CD14-positive monocyte (primary cell): ENCODE measurements at regions of chrX and their contacts with region 1.

Region 1: DNA sequence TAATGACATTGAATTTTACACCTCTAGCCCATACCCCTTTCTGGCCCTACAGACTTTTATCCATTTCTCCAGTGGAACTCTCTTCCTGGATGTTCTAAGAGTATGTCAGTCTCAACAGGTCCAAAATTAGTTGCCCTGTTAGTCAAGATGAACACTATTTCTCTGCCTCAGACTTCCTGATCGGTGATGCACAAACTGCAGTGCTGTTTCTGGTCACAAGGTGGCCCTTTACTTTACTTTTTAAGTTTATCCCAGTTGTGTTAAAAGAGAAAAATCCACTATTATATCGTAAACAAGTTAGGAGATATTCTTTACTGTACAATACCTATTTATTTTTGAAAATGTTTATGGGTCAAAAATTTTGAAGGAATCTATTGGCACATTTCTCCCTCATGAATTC is 13.1 kb downstream of the TCEAL7 start:
- DNase-seq: peak in 2 of 3 donors; percentile 1 to 9
- H3K4me3 ChIP-seq: no peak overlapping the region
- H3K4me3 Mint-ChIP-seq: no peak overlapping the region
- H3K27ac ChIP-seq: no peak overlapping the region
- H3K27ac Mint-ChIP-seq: no peak overlapping the region
- H3K4me1 ChIP-seq: no peaks in the 10 kb centered on the region
- H3K4me1 Mint-ChIP-seq: no peaks in the 10 kb centered on the region
- H3K27me3 ChIP-seq: peaks cover 0 to 6% of the 10 kb centered on the region in 2 donors
- H3K27me3 Mint-ChIP-seq: peaks cover 0 to 5% (median 0%) of the 10 kb centered on the region in 3 donors
- CTCF ChIP-seq: peak; percentile 63

Region 2: DNA sequence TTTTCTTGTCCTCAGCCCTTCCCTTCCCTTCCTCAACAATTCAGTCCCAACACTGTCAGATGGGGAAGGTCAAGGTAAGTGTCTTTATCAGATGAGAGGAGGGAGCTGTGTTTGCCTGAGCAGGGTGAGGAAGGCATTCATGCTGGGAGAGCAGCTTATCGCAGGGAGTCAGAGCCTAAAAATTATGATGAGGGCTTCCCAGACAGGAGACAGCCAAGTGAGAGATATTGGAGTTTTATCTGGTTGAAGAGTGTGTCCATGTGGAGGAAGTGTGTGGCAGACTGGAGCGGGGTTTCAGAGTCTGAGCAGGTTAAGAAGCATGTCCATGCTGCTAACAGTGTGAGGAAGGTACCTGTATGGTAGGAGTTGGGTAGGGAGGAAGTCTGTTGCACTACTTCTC is 109.8 kb before region 1 on chrX:
- intact Hi-C with region 1: no loop called
- DNase-seq: no peak
- H3K4me3 ChIP-seq: no peak overlapping the region
- H3K4me3 Mint-ChIP-seq: no peak overlapping the region
- H3K27ac ChIP-seq: no peak overlapping the region
- H3K27ac Mint-ChIP-seq: no peak overlapping the region
- H3K4me1 ChIP-seq: no peaks in the 10 kb centered on the region
- H3K4me1 Mint-ChIP-seq: no peaks in the 10 kb centered on the region
- H3K27me3 ChIP-seq: no peaks in the 10 kb centered on the region
- H3K27me3 Mint-ChIP-seq: peaks cover 2 to 6% (median 4%) of the 10 kb centered on the region in 3 donors
- CTCF ChIP-seq: no peak

Region 3: DNA sequence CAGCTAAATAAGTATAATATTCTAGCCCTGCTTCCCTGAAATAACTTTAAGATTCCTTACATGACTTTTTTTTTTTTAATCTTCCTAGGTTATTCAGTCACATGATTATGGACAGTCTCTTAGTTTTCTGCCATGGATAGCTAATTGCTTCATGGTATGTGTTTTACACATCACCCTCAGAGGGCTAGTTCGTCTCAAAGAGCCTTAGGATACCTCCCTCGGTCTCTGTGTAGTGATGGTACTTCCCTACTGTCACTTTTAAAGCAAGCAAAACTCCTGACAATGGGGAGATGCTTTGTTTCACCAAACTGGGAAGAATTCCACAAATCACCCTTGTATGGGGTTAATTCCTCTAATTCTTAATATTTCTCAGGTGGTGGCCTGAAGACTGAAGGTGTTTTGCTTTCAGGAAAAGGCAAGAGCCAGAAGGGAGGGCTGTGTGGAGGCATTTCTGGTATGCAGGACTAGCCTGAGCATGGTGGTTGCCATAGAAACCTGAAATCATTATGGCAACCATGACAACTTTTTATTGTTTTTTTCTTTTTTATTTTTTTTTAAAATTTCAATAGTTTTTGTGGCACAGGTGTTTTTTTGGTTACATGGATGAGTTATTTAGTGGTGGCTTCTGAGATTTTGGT is 103.7 kb after region 1 on chrX:
- intact Hi-C with region 1: loop called in 1 of 2 experiments (anchors 10 kb)
- DNase-seq: no peak
- H3K4me3 ChIP-seq: no peak overlapping the region
- H3K4me3 Mint-ChIP-seq: no peak overlapping the region
- H3K27ac ChIP-seq: no peak overlapping the region
- H3K27ac Mint-ChIP-seq: no peak overlapping the region
- H3K4me1 ChIP-seq: no peaks in the 10 kb centered on the region
- H3K4me1 Mint-ChIP-seq: no peaks in the 10 kb centered on the region
- H3K27me3 ChIP-seq: no peaks in the 10 kb centered on the region
- H3K27me3 Mint-ChIP-seq: peaks cover 0 to 2% (median 0%) of the 10 kb centered on the region in 3 donors
- CTCF ChIP-seq: no peak

Region 4: GRCh38 chrX:103464774-103465117 is 121.6 kb after region 1 on chrX:
- intact Hi-C with region 1: loop called in 1 of 2 experiments (anchors 10 kb)
- DNase-seq: peak; percentile 34 to 48 (median 48)
- H3K4me3 ChIP-seq: peak overlapping the region in 2 of 3 experiments; percentile 7 to 61
- H3K4me3 Mint-ChIP-seq: peak overlapping the region; percentile 67 to 80
- H3K27ac ChIP-seq: no peak overlapping the region
- H3K27ac Mint-ChIP-seq: peak overlapping the region in 1 of 7 donors; percentile 33
- H3K4me1 ChIP-seq: peaks cover 6% of the 10 kb centered on the region in 2 donors
- H3K4me1 Mint-ChIP-seq: peaks cover 11% of the 10 kb centered on the region
- H3K27me3 ChIP-seq: no peaks in the 10 kb centered on the region
- H3K27me3 Mint-ChIP-seq: no peaks in the 10 kb centered on the region
- CTCF ChIP-seq: peak; percentile 69